Prostate gland (tissue), 2 donors: ENCODE measurements at regions of chr10 and their contacts with region 1.

Region 1: DNA sequence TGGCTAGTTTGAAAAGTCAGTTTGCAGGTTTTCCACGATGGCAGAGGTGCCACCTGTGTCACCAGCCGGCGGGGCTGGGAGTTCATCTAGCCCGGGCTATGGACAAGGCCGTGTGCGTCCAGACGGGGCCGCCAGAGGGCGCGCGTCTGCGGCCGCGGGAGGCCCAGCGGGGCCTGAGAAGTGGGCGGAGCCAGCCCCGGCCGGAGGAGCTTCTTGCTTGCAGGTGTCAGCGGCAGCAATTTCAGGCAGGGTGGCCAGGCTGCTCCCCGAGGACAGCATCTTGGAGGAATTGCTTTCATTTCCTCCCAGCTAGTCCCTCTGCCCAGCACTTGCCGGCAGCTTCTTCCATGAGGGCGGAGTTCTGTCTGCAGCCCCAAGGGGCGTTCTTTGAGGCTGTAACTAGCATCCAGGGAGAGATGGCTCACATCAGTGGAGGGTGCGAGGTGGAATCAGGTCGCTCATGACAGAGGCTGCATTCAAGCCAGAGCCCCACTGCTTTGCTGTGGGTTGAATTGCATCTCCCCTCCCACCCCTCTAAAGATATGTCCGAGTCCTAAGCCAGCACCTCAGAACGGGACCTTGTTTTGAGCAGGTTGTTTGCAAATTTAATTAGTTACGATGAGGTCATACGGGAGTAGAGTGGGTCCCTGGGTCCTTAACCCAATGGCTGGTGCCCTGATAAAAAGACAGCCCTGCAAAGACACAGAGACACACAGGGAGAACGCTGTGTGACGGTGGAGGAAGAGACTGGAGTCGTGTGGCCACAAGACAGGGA is 85.9 kb upstream of the MKI67 start:
- DNase-seq: peak; percentile 73
- H3K4me3 ChIP-seq: no peak overlapping the region
- H3K27ac ChIP-seq: no peak overlapping the region
- H3K4me1 ChIP-seq: no peaks in the 10 kb centered on the region
- H3K27me3 ChIP-seq: no peaks in the 10 kb centered on the region
- CTCF ChIP-seq: peak; percentile 69 to 86 (median 72)
- POLR2A ChIP-seq: no peak

Region 2: DNA sequence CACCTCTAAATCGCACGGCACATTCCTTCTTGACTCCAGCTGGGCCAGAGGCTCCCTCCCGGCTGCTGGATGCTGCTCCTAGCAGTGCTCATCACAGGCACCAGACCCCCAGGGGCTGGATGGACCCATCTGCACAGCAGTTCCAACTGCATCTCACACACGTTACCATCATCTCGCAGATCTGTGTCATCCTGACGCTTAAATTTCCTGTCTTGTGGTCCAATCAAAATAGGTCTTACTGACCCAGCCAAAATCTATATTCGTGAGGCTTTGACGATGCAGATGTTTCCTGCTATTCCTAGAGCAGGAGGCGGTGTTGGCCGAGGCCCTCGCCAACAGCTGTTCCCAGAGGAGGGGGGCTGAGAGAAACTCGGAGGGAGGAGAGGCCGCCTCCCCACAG is 193.9 kb before region 1 on chr10:
- intact Hi-C with region 1: no loop called
- DNase-seq: no peak
- H3K4me3 ChIP-seq: no peak overlapping the region
- H3K27ac ChIP-seq: no peak overlapping the region
- H3K4me1 ChIP-seq: no peaks in the 10 kb centered on the region
- H3K27me3 ChIP-seq: no peaks in the 10 kb centered on the region
- CTCF ChIP-seq: no peak
- POLR2A ChIP-seq: no peak

Region 3: DNA sequence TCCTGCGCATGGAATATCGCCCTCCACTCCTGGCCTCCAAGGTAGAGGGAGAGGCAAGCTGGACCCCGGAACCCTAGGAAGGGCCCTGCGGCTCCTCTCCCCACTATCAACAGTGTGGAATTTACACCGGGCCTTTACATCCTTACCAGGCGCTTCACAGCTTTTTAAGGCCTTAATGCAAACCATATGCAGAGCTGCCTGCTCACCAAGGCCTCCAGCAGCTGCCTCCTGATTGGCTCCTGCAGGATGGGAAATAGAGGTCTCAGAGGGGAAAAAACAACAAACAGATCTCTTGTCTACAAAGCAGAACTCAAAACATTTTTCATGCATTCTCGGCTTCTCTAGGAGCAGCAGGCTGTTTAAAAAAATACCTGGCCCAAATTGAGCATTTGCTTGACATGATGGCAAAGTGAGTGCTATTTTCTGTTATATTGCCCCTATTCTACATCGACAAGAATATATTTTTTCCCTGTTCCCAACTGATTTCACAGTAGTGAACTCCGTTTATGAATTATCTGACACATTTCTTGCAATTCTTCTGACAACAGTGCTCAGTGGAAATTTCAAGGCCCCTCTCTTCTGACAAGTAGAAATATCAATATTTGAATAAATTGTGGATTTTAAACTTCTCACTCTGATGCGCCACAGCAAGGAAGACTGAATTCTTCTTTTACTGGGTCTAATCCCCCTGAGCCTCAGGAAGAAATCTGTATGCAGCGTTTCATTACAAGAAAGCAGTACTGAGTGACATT is 1700.2 kb after region 1 on chr10:
- intact Hi-C with region 1: no loop called
- DNase-seq: no peak
- H3K4me3 ChIP-seq: no peak overlapping the region
- H3K27ac ChIP-seq: no peak overlapping the region
- H3K4me1 ChIP-seq: no peaks in the 10 kb centered on the region
- H3K27me3 ChIP-seq: no peaks in the 10 kb centered on the region
- CTCF ChIP-seq: no peak
- POLR2A ChIP-seq: no peak

Region 4: GRCh38 chr10:129971381-129972144 is 1759.4 kb after region 1 on chr10:
- intact Hi-C with region 1: loop called (anchors 5 kb)
- DNase-seq: peak; percentile 48
- H3K4me3 ChIP-seq: peak overlapping the region in 1 of 2 donors; percentile 9
- H3K27ac ChIP-seq: no peak overlapping the region
- H3K4me1 ChIP-seq: no peaks in the 10 kb centered on the region
- H3K27me3 ChIP-seq: peaks cover 56% of the 10 kb centered on the region
- CTCF ChIP-seq: peak; percentile 42 to 66 (median 47)
- POLR2A ChIP-seq: no peak